Right cardiac atrium (tissue), 5 donors: ENCODE measurements at regions of chr7 and their contacts with region 1.

Region 1: GRCh38 chr7:114567416-114567815 is 152.8 kb downstream of the FOXP2 start:
- DNase-seq: no peak
- ATAC-seq: no peak
- H3K4me3 ChIP-seq: no peak overlapping the region
- H3K27ac ChIP-seq: no peak overlapping the region
- H3K4me1 ChIP-seq: no peaks in the 10 kb centered on the region
- H3K27me3 ChIP-seq: no peaks in the 10 kb centered on the region

Region 2: DNA sequence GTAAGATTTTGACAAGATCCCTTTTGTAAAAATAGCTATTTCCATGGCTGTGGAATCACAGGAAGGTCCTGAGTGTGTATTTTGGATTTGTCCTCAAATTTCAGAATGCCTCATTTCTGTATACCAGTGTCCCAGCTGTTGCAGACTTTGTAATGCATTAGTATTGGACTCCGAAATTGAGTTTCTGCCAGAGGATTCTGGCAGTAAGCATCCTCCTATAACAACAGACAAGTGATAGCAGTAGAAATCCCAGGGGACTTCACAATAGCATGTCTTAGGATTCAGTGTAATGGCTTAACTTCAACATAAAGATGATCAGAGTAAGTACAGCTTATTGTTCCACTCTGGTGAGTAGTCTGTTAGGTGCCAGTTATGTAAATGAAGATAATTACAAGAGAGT is 48.2 kb before region 1 on chr7:
- intact Hi-C with region 1: no loop called
- DNase-seq: no peak
- ATAC-seq: peak in 1 of 2 donors; percentile 38
- H3K4me3 ChIP-seq: no peak overlapping the region
- H3K27ac ChIP-seq: no peak overlapping the region
- H3K4me1 ChIP-seq: no peaks in the 10 kb centered on the region
- H3K27me3 ChIP-seq: no peaks in the 10 kb centered on the region

Region 3: GRCh38 chr7:114533155-114533554 is 34.3 kb before region 1 on chr7:
- intact Hi-C with region 1: loop called in 1 of 4 experiments (anchors 2 kb)
- DNase-seq: no peak
- ATAC-seq: no peak
- H3K4me3 ChIP-seq: no peak overlapping the region
- H3K27ac ChIP-seq: no peak overlapping the region
- H3K4me1 ChIP-seq: no peaks in the 10 kb centered on the region
- H3K27me3 ChIP-seq: no peaks in the 10 kb centered on the region